ENCODE measurements at regions of chr6 and their contacts with region 1.

Region 1: GRCh38 chr6:80457439-80457933 is 351.0 kb downstream of the BCKDHB start:
- DNase-seq: peak; percentile 38
- ATAC-seq: peak; percentile 86
- H3K4me3 ChIP-seq: no peak overlapping the region
- H3K27ac ChIP-seq: no peak overlapping the region
- H3K4me1 ChIP-seq: peaks cover 0 to 31% of the 10 kb centered on the region in 2 experiments; a peak in 2 of 4 replicates
- H3K27me3 ChIP-seq: no peaks in the 10 kb centered on the region
- CTCF ChIP-seq: peak; percentile 14 to 52 (median 48); a peak in 4 of 6 replicates
- POLR2A ChIP-seq: no peak
- RAD21 ChIP-seq: no peak

Region 2: GRCh38 chr6:80338201-80338836 is 119.2 kb before region 1 on chr6:
- CTCF ChIA-PET with region 1: no interaction called
- POLR2A ChIA-PET with region 1: no interaction called
- RAD21 ChIA-PET with region 1: no interaction called
- intact Hi-C with region 1: loop called (anchors 5 kb)
- DNase-seq: peak; percentile 34
- ATAC-seq: peak; percentile 90
- H3K4me3 ChIP-seq: no peak overlapping the region
- H3K27ac ChIP-seq: no peak overlapping the region
- H3K4me1 ChIP-seq: no peaks in the 10 kb centered on the region
- H3K27me3 ChIP-seq: no peaks in the 10 kb centered on the region
- CTCF ChIP-seq: peak; percentile 43 to 89 (median 87); a peak in 5 of 6 replicates
- POLR2A ChIP-seq: no peak
- RAD21 ChIP-seq: peak; percentile 66

Region 3: DNA sequence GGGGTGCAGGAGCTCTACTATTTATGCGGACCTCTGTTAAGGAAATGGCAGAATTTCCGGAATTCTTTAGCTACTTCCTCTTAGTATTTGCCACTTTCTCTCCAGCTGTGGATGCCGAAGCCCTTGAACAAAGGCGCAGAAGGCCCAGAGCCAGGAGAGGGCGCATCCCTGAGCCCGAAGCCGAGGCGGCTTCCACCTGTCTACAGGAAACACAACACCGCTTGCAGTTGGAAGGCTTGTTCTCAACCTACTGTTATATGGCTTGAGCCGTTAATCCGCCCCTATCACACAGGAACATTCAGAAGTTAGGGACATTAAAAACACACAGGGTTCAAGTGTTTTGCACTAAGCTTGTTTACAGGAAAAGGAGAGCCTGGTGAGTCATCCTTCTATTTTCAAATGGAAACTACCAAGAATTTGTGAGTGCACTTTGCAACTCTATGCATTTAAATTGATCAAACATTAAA is 66.1 kb after region 1 on chr6:
- CTCF ChIA-PET with region 1: no interaction called
- POLR2A ChIA-PET with region 1: no interaction called
- RAD21 ChIA-PET with region 1: no interaction called
- intact Hi-C with region 1: no loop called
- DNase-seq: no peak
- ATAC-seq: peak; percentile 68
- H3K4me3 ChIP-seq: no peak overlapping the region
- H3K27ac ChIP-seq: no peak overlapping the region
- H3K4me1 ChIP-seq: peaks cover 0 to 11% of the 10 kb centered on the region in 2 experiments; a peak in 2 of 4 replicates
- H3K27me3 ChIP-seq: no peaks in the 10 kb centered on the region
- CTCF ChIP-seq: peak in 2 of 3 experiments; percentile 39 to 42; a peak in 4 of 6 replicates
- POLR2A ChIP-seq: no peak
- RAD21 ChIP-seq: peak; percentile 18; the same call in 1 of the 2 replicates

Measured in HCT116 (cell line).